Activated naive CD4-positive, alpha-beta T cell treated with anti-CD3 and anti-CD28 coated beads for 36 hours (primary cell): ENCODE measurements at regions of chr10 and their contacts with region 1.

Region 1: GRCh38 chr10:58372607-58373441 is 12.4 kb upstream of the TFAM start:
- DNase-seq: no peak
- H3K4me3 Mint-ChIP-seq: no peak overlapping the region
- H3K27ac Mint-ChIP-seq: no peak overlapping the region
- H3K4me1 Mint-ChIP-seq: no peaks in the 10 kb centered on the region
- H3K27me3 Mint-ChIP-seq: no peaks in the 10 kb centered on the region

Region 2: GRCh38 chr10:58358314-58358933 is 14.4 kb before region 1 on chr10:
- CTCF ChIA-PET with region 1: interaction called, 3 read pairs
- intact Hi-C with region 1: loop called (anchors 2 kb)
- DNase-seq: no peak
- H3K4me3 Mint-ChIP-seq: no peak overlapping the region
- H3K27ac Mint-ChIP-seq: no peak overlapping the region
- H3K4me1 Mint-ChIP-seq: peaks cover 28% of the 10 kb centered on the region
- H3K27me3 Mint-ChIP-seq: no peaks in the 10 kb centered on the region

Region 3: DNA sequence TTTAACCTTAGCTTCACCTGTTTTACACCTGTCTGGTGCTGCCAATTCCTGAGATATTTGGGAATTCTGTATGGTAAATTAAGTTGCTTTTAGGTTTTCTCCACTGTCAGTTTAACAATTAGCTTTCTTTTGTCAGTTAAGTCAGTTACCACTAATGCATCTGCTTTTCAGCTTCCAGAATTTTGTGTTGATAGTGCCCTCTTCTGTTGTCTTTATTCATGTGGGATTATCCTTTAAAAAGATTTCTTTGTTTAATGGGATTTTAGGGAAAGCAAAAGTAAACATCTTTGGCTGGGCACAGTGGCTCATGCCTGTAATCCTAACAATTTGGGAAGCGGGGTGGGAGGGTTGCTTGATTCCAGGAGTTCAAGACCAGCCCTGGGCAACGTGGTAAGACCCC is 20.5 kb after region 1 on chr10:
- CTCF ChIA-PET with region 1: no interaction called
- intact Hi-C with region 1: no loop called
- DNase-seq: no peak
- H3K4me3 Mint-ChIP-seq: no peak overlapping the region
- H3K27ac Mint-ChIP-seq: no peak overlapping the region
- H3K4me1 Mint-ChIP-seq: peaks cover 28% of the 10 kb centered on the region
- H3K27me3 Mint-ChIP-seq: no peaks in the 10 kb centered on the region

Region 4: GRCh38 chr10:58414270-58415041 is 41.6 kb after region 1 on chr10:
- CTCF ChIA-PET with region 1: no interaction called
- intact Hi-C with region 1: no loop called
- DNase-seq: no peak
- H3K4me3 Mint-ChIP-seq: no peak overlapping the region
- H3K27ac Mint-ChIP-seq: no peak overlapping the region
- H3K4me1 Mint-ChIP-seq: no peaks in the 10 kb centered on the region
- H3K27me3 Mint-ChIP-seq: peaks cover 6% of the 10 kb centered on the region